CD4-positive, alpha-beta T cell (primary cell): ENCODE measurements at regions of chr6 and their contacts with region 1.

Region 1: GRCh38 chr6:18503593-18504231 is 116.6 kb downstream of the RNF144B start:
- DNase-seq: peak in 13 of 14 experiments; percentile 2 to 71 (median 16)
- ATAC-seq: no peak
- H3K4me3 ChIP-seq: no peak overlapping the region
- H3K4me3 Mint-ChIP-seq: no peak overlapping the region
- H3K27ac ChIP-seq: no peak overlapping the region
- H3K27ac Mint-ChIP-seq: no peak overlapping the region
- H3K4me1 ChIP-seq: no peaks in the 10 kb centered on the region
- H3K4me1 Mint-ChIP-seq: no peaks in the 10 kb centered on the region
- H3K27me3 ChIP-seq: peaks cover 0 to 4% of the 10 kb centered on the region in 2 experiments
- H3K27me3 Mint-ChIP-seq: no peaks in the 10 kb centered on the region
- CTCF ChIP-seq: peak; percentile 84

Region 2: GRCh38 chr6:18122124-18123093 is 381.3 kb before region 1 on chr6 and contains the start of gene NHLRC1:
- CTCF ChIA-PET with region 1: no interaction called
- POLR2A ChIA-PET with region 1: no interaction called
- intact Hi-C with region 1: loop called in 1 of 2 experiments (anchors 10 kb)
- DNase-seq: peak; percentile 31 to 87 (median 64)
- ATAC-seq: peak; percentile 93
- H3K4me3 ChIP-seq: peak within 1 kb of the TSS; percentile 39
- H3K4me3 Mint-ChIP-seq: peak within 1 kb of the TSS; percentile 86
- H3K27ac ChIP-seq: no peak within 1 kb of the TSS
- H3K27ac Mint-ChIP-seq: no peak within 1 kb of the TSS
- H3K4me1 ChIP-seq: peaks cover 13% of the 10 kb centered on the region
- H3K4me1 Mint-ChIP-seq: peaks cover 13% of the 10 kb centered on the region
- H3K27me3 ChIP-seq: no peaks in the 10 kb centered on the region
- H3K27me3 Mint-ChIP-seq: peaks cover 32% of the 10 kb centered on the region
- CTCF ChIP-seq: peak; percentile 42
- total RNA-seq, gene NHLRC1: 0.11 TPM in 1 of 2 experiments, not detected in the other

Region 3: DNA sequence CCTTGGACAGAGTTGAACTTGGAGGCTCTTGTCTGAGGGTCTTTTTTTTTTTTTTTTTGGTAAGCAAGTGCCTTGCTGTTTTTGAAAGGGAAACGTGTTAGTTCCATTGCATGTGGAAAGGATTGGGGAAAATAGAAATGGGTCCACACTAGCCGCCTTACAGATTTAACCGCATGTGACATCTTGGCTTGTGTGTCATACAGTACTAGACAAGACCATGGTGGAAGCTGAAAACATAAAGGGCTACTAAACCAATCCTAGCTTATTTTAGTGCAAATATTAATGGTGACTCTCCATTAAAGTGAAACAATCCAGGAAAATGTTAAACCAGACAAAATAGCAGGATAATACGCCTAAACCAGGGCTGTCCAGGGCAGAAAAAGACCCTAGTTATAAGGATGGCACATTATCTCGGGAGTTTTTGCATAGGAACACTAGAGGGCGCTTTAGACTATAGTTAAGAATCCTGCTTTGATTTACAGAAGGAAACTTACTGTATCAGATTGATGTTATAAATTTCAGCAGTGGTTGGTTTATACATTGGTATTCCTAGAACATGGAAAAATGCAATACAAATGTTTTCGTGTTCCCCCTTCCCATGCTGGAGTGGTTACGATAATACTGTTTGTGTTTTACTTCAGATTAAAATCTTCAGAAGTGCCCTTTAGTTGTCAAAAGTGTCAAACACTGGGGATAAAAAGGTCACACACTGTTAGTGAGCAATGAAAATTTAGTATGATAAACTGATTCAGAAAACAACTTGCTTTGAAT is 179.6 kb before region 1 on chr6:
- CTCF ChIA-PET with region 1: interaction called, 5 read pairs
- POLR2A ChIA-PET with region 1: interaction called, 3 read pairs
- intact Hi-C with region 1: loop called (anchors 1 kb)
- DNase-seq: peak in 4 of 14 experiments; percentile 26 to 62 (median 52)
- ATAC-seq: no peak
- H3K4me3 ChIP-seq: no peak overlapping the region
- H3K4me3 Mint-ChIP-seq: no peak overlapping the region
- H3K27ac ChIP-seq: no peak overlapping the region
- H3K27ac Mint-ChIP-seq: no peak overlapping the region
- H3K4me1 ChIP-seq: no peaks in the 10 kb centered on the region
- H3K4me1 Mint-ChIP-seq: no peaks in the 10 kb centered on the region
- H3K27me3 ChIP-seq: no peaks in the 10 kb centered on the region
- H3K27me3 Mint-ChIP-seq: peaks cover 15% of the 10 kb centered on the region
- CTCF ChIP-seq: peak; percentile 96

Region 4: GRCh38 chr6:18640754-18641153 is 137.0 kb after region 1 on chr6:
- CTCF ChIA-PET with region 1: no interaction called
- POLR2A ChIA-PET with region 1: no interaction called
- intact Hi-C with region 1: no loop called
- DNase-seq: no peak
- ATAC-seq: no peak
- H3K4me3 ChIP-seq: no peak overlapping the region
- H3K4me3 Mint-ChIP-seq: no peak overlapping the region
- H3K27ac ChIP-seq: no peak overlapping the region
- H3K27ac Mint-ChIP-seq: no peak overlapping the region
- H3K4me1 ChIP-seq: no peaks in the 10 kb centered on the region
- H3K4me1 Mint-ChIP-seq: no peaks in the 10 kb centered on the region
- H3K27me3 ChIP-seq: peaks cover 0 to 3% of the 10 kb centered on the region in 2 experiments
- H3K27me3 Mint-ChIP-seq: peaks cover 10% of the 10 kb centered on the region
- CTCF ChIP-seq: no peak